ENCODE measurements at regions of chr3 and their contacts with region 1.

Region 1: DNA sequence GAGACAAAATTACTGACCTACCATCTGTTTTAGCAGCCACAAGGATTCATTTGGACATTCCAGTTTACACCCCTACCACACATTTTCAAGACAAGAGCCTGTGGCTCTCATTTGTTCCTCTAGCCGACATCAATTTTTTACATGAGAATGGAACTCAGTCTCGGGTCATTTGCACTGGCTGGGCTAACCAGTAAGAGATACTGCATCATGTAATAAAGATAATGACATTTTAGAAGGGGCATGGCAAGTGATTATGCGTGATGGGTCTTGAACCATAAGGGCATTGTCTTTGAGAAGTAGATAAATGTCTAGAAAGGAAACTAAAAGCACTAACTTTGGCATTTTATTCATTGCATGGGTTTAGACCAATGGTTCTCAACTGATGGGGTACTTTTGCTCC is 146.0 kb upstream of the GRM7 start:
- DNase-seq: no peak
- H3K4me3 ChIP-seq: no peak overlapping the region
- H3K27ac ChIP-seq: no peak overlapping the region
- H3K4me1 ChIP-seq: no peaks in the 10 kb centered on the region
- H3K27me3 ChIP-seq: no peaks in the 10 kb centered on the region
- CTCF ChIP-seq: no peak

Region 2: DNA sequence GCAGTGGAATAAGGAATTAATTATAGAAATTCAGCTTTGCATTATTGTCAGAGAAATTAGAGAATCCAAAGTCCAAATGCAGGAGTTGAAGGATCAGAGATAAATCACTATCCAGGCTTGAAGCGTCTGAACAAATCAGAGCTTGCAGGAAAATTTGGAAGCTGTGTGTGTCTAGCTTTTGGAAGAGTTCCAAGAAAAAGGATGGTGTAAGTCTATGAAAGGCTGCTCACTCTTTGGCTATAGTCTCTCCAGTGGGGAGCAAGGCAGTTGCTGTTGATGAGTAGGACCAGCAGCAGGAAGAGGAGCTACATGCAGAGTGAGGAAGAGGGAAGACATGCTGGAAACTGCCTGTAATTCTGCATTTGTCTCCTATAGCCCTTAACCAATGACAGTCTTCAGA is 318.3 kb before region 1 on chr3:
- CTCF ChIA-PET with region 1: no interaction called
- POLR2A ChIA-PET with region 1: no interaction called
- intact Hi-C with region 1: loop called (anchors 5 kb)
- DNase-seq: no peak
- H3K4me3 ChIP-seq: no peak overlapping the region
- H3K27ac ChIP-seq: no peak overlapping the region
- H3K4me1 ChIP-seq: no peaks in the 10 kb centered on the region
- H3K27me3 ChIP-seq: peaks cover 10% of the 10 kb centered on the region
- CTCF ChIP-seq: no peak

Region 3: GRCh38 chr3:6471744-6472143 is 243.2 kb before region 1 on chr3:
- CTCF ChIA-PET with region 1: no interaction called
- POLR2A ChIA-PET with region 1: no interaction called
- intact Hi-C with region 1: no loop called
- DNase-seq: no peak
- H3K4me3 ChIP-seq: no peak overlapping the region
- H3K27ac ChIP-seq: no peak overlapping the region
- H3K4me1 ChIP-seq: no peaks in the 10 kb centered on the region
- H3K27me3 ChIP-seq: peaks cover 5% of the 10 kb centered on the region; the same call in 1 of the 2 replicates
- CTCF ChIP-seq: no peak

Region 4: GRCh38 chr3:6631371-6631770 is 83.6 kb before region 1 on chr3:
- CTCF ChIA-PET with region 1: no interaction called
- POLR2A ChIA-PET with region 1: no interaction called
- intact Hi-C with region 1: no loop called
- DNase-seq: no peak
- H3K4me3 ChIP-seq: no peak overlapping the region
- H3K27ac ChIP-seq: no peak overlapping the region
- H3K4me1 ChIP-seq: no peaks in the 10 kb centered on the region
- H3K27me3 ChIP-seq: no peaks in the 10 kb centered on the region
- CTCF ChIP-seq: no peak

Measured in PC-9 (cell line).